ENCODE measurements at regions of chr5 and their contacts with region 1.

Region 1: DNA sequence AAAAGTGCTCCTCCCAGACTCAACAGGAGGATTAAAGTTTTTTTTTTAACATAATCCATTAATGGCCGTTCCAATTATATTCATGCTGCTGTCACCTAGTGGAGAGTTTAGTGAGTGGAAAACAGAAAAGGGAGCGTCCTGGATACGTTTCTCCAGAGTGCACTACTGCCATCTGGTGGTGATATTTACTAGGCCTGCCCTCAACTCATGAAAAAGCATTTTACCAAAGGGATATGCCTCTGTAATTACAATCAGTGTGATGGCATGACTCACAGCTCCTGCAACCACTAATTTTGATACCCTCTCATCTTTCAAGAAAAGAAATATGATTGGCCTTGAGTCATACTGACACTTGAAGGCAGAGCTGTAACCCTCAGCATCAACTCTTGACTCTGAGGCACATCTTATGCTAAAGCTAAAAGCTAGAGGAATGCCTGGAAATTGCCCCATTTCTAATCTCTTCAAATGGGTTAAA is 20.0 kb downstream of the MINAR2 start:
- DNase-seq: peak; percentile 84
- H3K4me3 Mint-ChIP-seq: no peak overlapping the region
- H3K27ac Mint-ChIP-seq: no peak overlapping the region
- H3K4me1 Mint-ChIP-seq: peaks cover 29% of the 10 kb centered on the region
- H3K27me3 Mint-ChIP-seq: no peaks in the 10 kb centered on the region
- CTCF ChIP-seq: peak; percentile 93

Region 2: DNA sequence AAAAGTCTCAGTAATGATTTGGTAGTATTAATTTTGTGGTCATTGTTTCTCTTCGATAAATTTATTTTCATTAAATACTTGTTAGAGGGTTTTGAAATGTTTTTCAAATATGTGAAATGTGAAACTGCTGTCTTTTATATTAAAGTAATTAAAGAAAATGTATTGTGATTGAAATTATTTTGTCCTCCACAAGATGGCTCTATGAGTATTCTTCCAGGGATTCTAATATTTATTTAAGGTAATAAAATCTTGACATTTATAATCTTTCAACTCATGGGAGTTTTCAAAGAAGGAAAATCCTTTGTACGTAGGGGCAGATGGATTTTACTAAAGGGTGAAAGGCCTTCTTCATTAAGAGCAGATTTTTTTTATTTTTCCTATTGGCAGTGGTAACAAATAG is 654.1 kb before region 1 on chr5:
- CTCF ChIA-PET with region 1: no interaction called
- intact Hi-C with region 1: loop called (anchors 5 kb)
- DNase-seq: no peak
- H3K4me3 Mint-ChIP-seq: no peak overlapping the region
- H3K27ac Mint-ChIP-seq: no peak overlapping the region
- H3K4me1 Mint-ChIP-seq: peaks cover 5% of the 10 kb centered on the region
- H3K27me3 Mint-ChIP-seq: no peaks in the 10 kb centered on the region
- CTCF ChIP-seq: no peak

Region 3: DNA sequence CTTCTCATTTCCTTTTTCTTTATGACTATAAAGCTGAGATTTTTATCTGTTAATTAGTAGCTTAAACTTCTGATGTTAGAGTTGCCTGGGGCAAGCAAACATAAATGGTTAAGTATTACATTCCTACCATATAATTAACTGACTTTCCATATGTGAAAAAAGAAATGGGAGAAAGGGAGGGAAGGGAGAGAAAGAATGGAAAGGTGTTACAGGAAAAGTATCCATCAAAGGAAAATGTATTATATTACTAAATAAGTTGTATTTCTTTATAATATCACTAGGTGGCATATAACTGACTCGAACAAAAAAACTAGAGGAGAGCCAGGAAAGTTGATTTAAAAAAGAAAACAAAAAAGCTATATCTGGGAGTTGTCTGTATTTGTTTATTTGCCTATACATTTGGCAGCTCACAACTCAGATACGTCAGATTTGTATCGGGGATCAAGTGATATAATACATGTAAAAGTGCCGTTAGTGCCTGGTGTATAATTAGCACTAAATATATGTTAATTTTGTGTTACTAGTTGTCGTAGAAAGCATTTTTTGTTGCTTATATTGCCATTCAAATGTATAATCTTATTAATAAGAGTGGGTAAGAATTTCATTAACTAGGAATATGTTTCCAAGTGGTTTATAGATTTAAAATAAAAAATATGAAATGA is 367.5 kb before region 1 on chr5:
- CTCF ChIA-PET with region 1: interaction called, 3 read pairs
- intact Hi-C with region 1: loop called (anchors 1 kb)
- DNase-seq: no peak
- H3K4me3 Mint-ChIP-seq: peak overlapping the region; percentile 16
- H3K27ac Mint-ChIP-seq: no peak overlapping the region
- H3K4me1 Mint-ChIP-seq: no peaks in the 10 kb centered on the region
- H3K27me3 Mint-ChIP-seq: no peaks in the 10 kb centered on the region
- CTCF ChIP-seq: peak; percentile 43

Region 4: DNA sequence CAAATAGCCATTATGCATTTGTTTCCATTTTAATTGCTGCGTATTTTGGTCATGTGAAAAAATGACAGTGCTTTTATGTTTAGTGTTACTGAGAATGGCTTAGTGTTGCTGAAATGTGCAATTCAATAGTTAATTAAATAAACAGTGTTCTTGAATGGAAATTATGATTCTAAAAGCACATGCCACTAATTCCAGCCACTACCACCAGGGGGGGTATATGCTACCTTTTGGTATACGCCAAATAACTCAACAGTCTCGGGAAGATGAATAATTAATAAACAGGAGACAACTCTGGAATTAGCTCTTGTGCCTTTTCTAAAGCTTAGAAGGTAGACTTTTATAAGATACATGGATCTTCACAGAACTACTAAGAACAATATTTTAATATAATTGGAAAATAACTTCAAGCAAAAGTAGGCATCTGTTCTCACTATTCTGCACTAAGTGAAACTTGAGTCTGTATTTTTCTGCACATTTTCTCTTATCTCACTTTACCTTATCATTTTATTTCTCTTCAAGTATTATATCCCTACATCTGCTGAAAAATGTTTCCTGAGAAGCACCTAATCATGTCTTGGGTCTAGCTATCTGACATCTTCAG is 103.5 kb before region 1 on chr5:
- CTCF ChIA-PET with region 1: interaction called, 5 read pairs
- intact Hi-C with region 1: loop called (anchors 1 kb)
- DNase-seq: peak; percentile 78
- H3K4me3 Mint-ChIP-seq: no peak overlapping the region
- H3K27ac Mint-ChIP-seq: no peak overlapping the region
- H3K4me1 Mint-ChIP-seq: no peaks in the 10 kb centered on the region
- H3K27me3 Mint-ChIP-seq: no peaks in the 10 kb centered on the region
- CTCF ChIP-seq: peak; percentile 78

Region 5: GRCh38 chr5:129844764-129845163 is 76.8 kb after region 1 on chr5:
- CTCF ChIA-PET with region 1: no interaction called
- intact Hi-C with region 1: no loop called
- DNase-seq: no peak
- H3K4me3 Mint-ChIP-seq: no peak overlapping the region
- H3K27ac Mint-ChIP-seq: no peak overlapping the region
- H3K4me1 Mint-ChIP-seq: no peaks in the 10 kb centered on the region
- H3K27me3 Mint-ChIP-seq: peaks cover 14% of the 10 kb centered on the region
- CTCF ChIP-seq: no peak

Region 6: DNA sequence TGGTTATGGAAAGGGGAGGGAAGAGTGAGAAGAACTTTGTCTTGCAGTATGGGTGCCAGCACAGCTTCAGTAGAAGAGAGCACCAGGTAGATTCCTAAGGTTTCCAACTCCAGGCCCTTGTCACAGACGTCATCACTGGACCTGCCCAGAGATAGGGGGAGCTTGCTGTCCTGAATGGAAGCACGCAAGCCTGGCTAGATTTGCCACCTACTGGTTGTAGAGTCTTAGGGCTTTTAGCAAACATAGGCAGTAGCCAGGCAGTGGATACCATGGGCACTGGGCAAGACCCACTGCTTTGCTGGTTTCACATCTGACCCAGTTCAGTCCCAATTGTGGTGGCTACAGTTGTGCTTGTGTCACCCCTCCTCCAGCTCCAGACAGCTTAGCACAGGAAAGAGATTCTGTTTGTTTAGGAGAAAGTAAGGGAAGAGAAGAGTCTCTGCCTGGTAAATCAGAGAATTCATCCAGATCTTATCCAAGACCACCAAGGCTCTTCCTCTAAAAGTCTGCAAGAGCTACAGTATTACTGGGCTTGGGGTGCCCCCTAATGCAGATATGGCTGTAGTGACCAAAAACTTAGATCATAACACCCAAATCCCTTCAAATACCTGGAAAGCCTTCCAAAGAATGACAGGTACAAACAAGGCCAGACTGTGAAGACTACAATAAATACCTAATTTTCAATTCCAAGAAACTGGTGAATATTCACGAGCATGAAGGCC is 1238.2 kb after region 1 on chr5:
- CTCF ChIA-PET with region 1: interaction called, 3 read pairs
- intact Hi-C with region 1: loop called (anchors 5 kb)
- DNase-seq: no peak
- H3K4me3 Mint-ChIP-seq: no peak overlapping the region
- H3K27ac Mint-ChIP-seq: no peak overlapping the region
- H3K4me1 Mint-ChIP-seq: no peaks in the 10 kb centered on the region
- H3K27me3 Mint-ChIP-seq: peaks cover 32% of the 10 kb centered on the region
- CTCF ChIP-seq: peak; percentile 12